ENCODE measurements at regions of chr7 and their contacts with region 1.

Region 1: DNA sequence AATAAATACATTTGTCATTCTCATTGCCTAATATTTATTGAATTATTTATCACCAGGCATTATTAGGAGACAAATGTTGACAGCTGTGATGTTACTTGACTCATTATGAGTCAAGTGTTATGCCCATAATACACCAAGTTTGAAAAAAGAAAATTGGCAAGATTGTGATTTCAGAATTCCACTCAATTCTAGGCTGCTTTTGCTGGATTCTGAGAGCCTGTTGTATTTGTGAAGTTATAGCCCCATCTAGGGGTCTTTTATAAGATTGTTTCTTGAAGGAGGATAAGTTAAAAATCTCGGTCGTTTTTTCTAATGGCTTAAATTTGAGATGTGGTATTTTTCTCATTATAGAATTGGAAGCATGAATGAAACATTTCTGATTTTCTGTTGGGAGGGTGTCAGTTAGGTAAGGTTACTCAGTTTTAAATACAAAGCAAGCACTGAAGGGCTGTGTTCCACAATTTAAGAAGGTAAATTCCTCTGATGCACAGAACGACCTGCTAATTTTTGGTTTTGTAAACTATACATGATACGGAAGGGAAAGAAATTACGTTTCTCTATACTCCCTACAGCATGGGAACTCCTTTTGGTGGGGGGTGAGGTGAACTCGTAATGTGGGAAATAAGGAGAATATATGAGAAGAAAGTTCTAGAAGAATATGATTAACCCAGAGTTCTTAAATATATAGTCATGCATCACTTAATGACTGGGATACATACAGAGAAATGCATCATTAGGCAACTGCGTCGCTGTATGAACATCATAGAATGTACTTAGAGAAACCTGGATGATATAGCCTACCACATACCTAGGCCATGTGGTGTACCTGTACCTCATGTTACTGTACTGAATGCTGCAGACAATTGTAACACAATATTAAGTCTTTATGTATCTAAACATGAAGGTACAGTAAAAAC is 2.6 kb downstream of the STK31 start:
- DNase-seq: no peak
- H3K4me3 Mint-ChIP-seq: no peak overlapping the region
- H3K27ac Mint-ChIP-seq: no peak overlapping the region
- H3K4me1 Mint-ChIP-seq: no peaks in the 10 kb centered on the region
- H3K27me3 Mint-ChIP-seq: no peaks in the 10 kb centered on the region

Region 2: GRCh38 chr7:23520582-23520981 is 192.0 kb before region 1 on chr7:
- CTCF ChIA-PET with region 1: no interaction called
- POLR2A ChIA-PET with region 1: no interaction called
- DNase-seq: no peak
- H3K4me3 Mint-ChIP-seq: no peak overlapping the region
- H3K27ac Mint-ChIP-seq: no peak overlapping the region
- H3K4me1 Mint-ChIP-seq: peaks cover 38% of the 10 kb centered on the region
- H3K27me3 Mint-ChIP-seq: no peaks in the 10 kb centered on the region

Region 3: DNA sequence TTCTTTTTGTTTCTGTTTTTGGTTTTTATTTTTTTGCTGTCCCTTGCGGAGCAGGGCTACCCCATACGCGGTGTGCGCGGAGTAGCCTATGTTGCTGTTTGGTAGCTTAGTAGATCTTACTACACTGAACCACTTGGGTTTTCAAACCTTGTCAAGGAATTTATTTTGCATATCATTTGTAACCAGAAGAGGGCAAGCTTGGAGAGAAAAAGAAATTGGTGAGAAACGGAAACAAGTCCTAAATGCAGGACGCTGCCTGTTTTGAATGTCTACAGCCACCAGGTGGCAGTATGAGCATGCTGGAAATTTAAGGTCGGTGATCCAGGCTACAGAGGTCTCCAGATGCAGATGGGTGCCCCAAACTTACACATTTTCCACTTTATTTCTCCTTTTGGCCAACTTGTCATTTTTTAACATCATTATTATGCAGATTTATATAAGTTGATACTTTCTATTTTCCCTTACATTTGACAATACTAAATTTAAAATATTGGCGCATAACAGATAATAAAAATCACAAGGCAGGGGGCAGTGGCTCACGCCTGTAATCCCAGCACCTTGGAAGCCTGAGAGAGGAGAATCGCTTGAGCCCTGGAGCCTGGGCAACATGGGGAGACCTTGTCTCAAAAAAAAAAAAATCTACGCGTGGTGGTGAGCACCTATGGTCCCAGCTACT is 165.6 kb before region 1 on chr7:
- CTCF ChIA-PET with region 1: interaction called, 16 read pairs
- POLR2A ChIA-PET with region 1: no interaction called
- DNase-seq: peak; percentile 81
- H3K4me3 Mint-ChIP-seq: no peak overlapping the region
- H3K27ac Mint-ChIP-seq: no peak overlapping the region
- H3K4me1 Mint-ChIP-seq: peaks cover 10% of the 10 kb centered on the region
- H3K27me3 Mint-ChIP-seq: no peaks in the 10 kb centered on the region

Region 4: GRCh38 chr7:23570592-23571200 is 141.9 kb before region 1 on chr7:
- CTCF ChIA-PET with region 1: interaction called, 27 read pairs
- POLR2A ChIA-PET with region 1: no interaction called
- DNase-seq: peak; percentile 75
- H3K4me3 Mint-ChIP-seq: no peak overlapping the region
- H3K27ac Mint-ChIP-seq: no peak overlapping the region
- H3K4me1 Mint-ChIP-seq: no peaks in the 10 kb centered on the region
- H3K27me3 Mint-ChIP-seq: peaks cover 8% of the 10 kb centered on the region

Region 5: DNA sequence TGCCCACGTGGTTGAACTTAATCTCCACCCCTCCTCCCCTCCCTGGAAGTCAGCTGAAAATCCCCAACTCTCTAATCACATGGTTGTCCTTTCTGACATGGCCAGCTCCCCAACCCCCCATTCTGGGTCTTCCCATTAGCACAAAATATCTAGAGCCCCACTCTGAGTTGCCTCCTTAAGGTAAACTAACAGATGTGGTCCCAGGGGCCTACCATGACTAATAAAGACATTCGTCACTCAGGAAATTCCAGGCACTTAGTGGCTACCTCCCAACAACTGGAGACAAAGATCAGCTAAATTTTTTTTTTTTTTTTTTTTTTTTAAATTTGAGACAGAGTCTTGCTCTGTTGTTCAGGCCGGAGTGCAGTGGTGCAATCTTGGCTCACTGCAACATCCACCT is 94.4 kb before region 1 on chr7:
- CTCF ChIA-PET with region 1: no interaction called
- POLR2A ChIA-PET with region 1: no interaction called
- DNase-seq: no peak
- H3K4me3 Mint-ChIP-seq: no peak overlapping the region
- H3K27ac Mint-ChIP-seq: no peak overlapping the region
- H3K4me1 Mint-ChIP-seq: no peaks in the 10 kb centered on the region
- H3K27me3 Mint-ChIP-seq: no peaks in the 10 kb centered on the region

Region 6: GRCh38 chr7:23759671-23760391 is 47.2 kb after region 1 on chr7:
- CTCF ChIA-PET with region 1: no interaction called
- POLR2A ChIA-PET with region 1: no interaction called
- DNase-seq: no peak
- H3K4me3 Mint-ChIP-seq: no peak overlapping the region
- H3K27ac Mint-ChIP-seq: no peak overlapping the region
- H3K4me1 Mint-ChIP-seq: no peaks in the 10 kb centered on the region
- H3K27me3 Mint-ChIP-seq: no peaks in the 10 kb centered on the region